ENCODE measurements at regions of chr2 and their contacts with region 1.

Region 1: GRCh38 chr2:101001691-101002561 is at the start of gene RPL31:
- DNase-seq: peak; percentile 99
- H3K4me3 Mint-ChIP-seq: peak within 1 kb of the TSS; percentile 100
- H3K27ac Mint-ChIP-seq: peak within 1 kb of the TSS; percentile 96
- H3K4me1 Mint-ChIP-seq: peaks cover 46% of the 10 kb centered on the region
- H3K27me3 Mint-ChIP-seq: no peaks in the 10 kb centered on the region
- total RNA-seq, gene RPL31: 1,154 and 1,159 TPM in 2 replicates

Region 2: GRCh38 chr2:100427628-100428258 is 574.2 kb before region 1 on chr2:
- intact Hi-C with region 1: loop called (anchors 10 kb)
- DNase-seq: peak; percentile 91
- H3K4me3 Mint-ChIP-seq: no peak overlapping the region
- H3K27ac Mint-ChIP-seq: no peak overlapping the region
- H3K4me1 Mint-ChIP-seq: peaks cover 6% of the 10 kb centered on the region
- H3K27me3 Mint-ChIP-seq: peaks cover 35% of the 10 kb centered on the region

Region 3: GRCh38 chr2:100562732-100563720 is 438.9 kb before region 1 on chr2 and contains the start of gene PDCL3:
- intact Hi-C with region 1: loop called (anchors 1 kb)
- DNase-seq: peak; percentile 99
- H3K4me3 Mint-ChIP-seq: peak within 1 kb of the TSS; percentile 99
- H3K27ac Mint-ChIP-seq: peak within 1 kb of the TSS; percentile 99
- H3K4me1 Mint-ChIP-seq: peaks cover 39% of the 10 kb centered on the region
- H3K27me3 Mint-ChIP-seq: no peaks in the 10 kb centered on the region
- total RNA-seq, gene PDCL3: 42.2 and 44.3 TPM in 2 replicates

Region 4: DNA sequence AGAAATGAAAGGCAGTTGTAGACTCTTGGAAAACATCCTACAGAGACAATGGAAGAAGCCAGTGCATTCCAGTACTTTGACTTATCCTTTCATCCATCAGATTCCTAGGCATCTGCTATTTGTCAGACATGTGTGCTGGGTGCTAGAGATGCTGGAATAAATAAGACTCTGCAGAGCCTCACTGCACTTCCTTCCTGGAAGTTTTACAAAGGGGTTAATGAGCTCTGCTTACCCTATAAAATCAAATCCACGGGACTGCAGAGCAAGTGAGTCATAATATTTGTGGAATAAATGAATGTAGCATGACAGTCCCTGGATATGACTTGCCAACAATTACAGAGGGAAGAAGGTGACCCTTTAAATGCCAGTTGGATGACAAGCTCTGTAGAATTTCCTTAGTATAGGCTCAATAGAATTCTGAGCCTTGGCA is 234.7 kb before region 1 on chr2:
- intact Hi-C with region 1: no loop called
- DNase-seq: no peak
- H3K4me3 Mint-ChIP-seq: no peak overlapping the region
- H3K27ac Mint-ChIP-seq: no peak overlapping the region
- H3K4me1 Mint-ChIP-seq: no peaks in the 10 kb centered on the region
- H3K27me3 Mint-ChIP-seq: peaks cover 7% of the 10 kb centered on the region

Region 5: GRCh38 chr2:100813527-100813926 is 188.4 kb before region 1 on chr2:
- intact Hi-C with region 1: loop called (anchors 5 kb)
- DNase-seq: peak; percentile 62
- H3K4me3 Mint-ChIP-seq: peak overlapping the region; percentile 28
- H3K27ac Mint-ChIP-seq: peak overlapping the region; percentile 35
- H3K4me1 Mint-ChIP-seq: peaks cover 30% of the 10 kb centered on the region
- H3K27me3 Mint-ChIP-seq: peaks cover 20% of the 10 kb centered on the region

Region 6: DNA sequence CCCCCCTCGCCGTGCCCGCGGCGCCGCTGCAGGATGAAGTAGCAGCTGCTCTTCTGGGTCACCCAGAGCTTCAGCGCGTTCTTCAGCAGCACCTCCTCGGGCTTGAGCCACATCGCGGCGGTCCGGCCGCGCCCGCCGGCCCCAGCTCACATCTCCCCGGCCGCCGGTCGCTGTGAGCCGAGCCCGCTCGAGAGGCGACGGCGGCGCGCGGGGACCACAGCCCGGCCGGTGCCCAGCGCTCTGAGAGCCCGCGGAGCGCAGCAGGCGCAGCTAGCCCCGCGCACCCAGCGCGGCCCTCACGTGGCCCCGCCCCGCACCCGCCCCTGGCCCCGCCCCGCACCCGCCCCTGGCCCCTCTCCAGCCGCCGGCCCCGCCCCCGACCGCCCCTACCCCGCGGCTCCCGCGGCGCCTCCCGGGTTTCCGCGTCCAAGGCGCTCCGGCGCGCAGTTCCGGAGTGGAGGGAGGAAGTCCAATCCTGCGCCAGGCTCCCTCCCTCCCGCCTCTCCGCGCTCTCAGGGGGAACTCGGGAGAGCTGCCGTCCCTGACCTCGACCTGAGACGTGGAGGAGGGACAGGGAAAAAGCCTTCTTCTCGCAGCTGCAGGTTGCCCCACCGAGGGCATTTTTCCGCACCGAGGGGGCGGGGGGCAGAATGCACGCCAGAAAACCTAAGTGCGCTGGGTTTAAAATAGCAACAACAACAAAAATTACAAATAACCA is 149.4 kb after region 1 on chr2 and contains the start of gene TBC1D8:
- intact Hi-C with region 1: loop called (anchors 5 kb)
- DNase-seq: peak; percentile 91
- H3K4me3 Mint-ChIP-seq: peak within 1 kb of the TSS; percentile 76
- H3K27ac Mint-ChIP-seq: peak within 1 kb of the TSS; percentile 48
- H3K4me1 Mint-ChIP-seq: peaks cover 17% of the 10 kb centered on the region
- H3K27me3 Mint-ChIP-seq: peaks cover 76% of the 10 kb centered on the region
- total RNA-seq, gene TBC1D8: 1.3 and 1.4 TPM in 2 replicates

Region 7: DNA sequence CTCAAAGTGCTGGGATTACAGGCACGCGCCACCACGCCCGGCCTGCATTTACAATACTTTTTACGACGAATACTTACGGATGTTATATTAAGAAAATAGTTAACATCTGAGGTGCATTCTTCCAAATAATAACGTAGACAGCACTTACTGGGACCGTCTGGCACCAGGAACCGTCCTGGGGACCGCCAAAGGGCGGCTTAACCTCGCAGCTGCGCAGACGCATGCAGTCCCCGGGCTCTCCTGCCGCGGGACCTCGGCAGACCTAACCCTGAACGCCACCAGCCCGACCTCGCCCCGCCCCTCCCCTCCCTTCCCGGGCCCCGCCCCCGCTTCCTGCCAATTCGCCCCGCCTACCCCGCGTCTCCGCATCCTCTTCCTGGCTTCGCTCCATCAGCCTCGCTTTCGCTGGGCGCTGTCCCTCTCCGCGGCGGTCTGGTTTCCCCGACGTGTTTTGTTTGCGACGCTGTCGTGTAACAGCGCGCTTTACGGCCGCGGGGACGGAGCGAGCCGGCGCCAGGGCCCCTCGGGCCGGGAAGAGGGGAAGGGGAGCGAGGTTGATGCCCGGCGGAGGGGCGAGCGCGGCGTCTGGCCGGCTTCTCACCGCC is 250.6 kb after region 1 on chr2 and contains the start of gene CNOT11:
- intact Hi-C with region 1: loop called (anchors 2 kb)
- DNase-seq: peak; percentile 99
- H3K4me3 Mint-ChIP-seq: peak within 1 kb of the TSS; percentile 93
- H3K27ac Mint-ChIP-seq: peak within 1 kb of the TSS; percentile 96
- H3K4me1 Mint-ChIP-seq: peaks cover 44% of the 10 kb centered on the region
- H3K27me3 Mint-ChIP-seq: no peaks in the 10 kb centered on the region
- total RNA-seq, gene CNOT11: 65.0 and 69.6 TPM in 2 replicates

Region 8: DNA sequence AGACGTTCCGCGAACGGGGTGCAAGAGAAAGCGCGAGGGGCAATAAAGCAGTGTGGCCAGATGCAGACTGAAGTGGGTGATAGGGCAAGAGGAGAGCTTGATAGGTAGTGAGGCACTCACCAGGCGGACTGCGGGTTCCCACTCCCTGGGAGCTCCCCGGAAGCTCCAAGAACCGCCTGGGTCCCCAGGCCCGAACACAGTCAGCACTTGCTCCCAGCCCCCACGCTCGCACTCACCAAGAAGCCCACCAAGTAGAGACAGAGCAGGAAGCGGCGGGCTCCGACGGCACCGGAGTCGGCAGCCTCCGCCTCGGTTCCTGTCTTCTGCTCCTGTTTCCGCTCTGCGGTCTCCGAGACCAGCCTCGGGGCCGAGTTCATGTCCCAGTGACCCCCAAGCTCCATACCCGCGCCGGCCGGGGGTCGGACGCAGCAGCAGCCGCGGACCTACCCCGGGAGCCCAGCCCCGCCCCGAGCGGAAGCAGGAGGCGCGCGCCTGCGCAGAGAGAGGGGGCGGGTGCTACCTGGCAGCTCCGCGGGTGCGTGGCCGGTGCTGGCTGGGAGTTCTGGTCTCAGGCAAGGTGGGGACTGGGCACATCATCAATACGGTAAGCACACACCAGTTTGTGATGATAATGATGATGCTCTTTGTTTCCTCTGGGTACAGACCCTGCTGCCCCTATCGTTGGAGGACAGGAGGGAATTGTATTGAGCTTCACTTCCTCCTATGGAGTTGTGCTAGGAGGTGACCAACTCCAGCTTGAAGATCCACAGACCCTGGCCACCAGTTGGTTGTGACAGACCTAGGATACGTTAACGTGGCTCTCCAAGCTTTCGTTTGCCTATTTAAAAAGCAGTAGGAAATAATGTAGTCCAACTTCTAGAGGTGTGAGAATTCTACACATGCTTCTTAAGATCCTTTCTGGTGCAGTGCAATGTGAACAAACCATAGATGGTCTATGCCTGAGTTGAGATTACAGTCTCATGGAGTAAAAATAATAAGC is 1734.8 kb after region 1 on chr2:
- intact Hi-C with region 1: loop called (anchors 5 kb)
- DNase-seq: peak; percentile 97
- H3K4me3 Mint-ChIP-seq: peak overlapping the region; percentile 88
- H3K27ac Mint-ChIP-seq: peak overlapping the region; percentile 89
- H3K4me1 Mint-ChIP-seq: peaks cover 22% of the 10 kb centered on the region
- H3K27me3 Mint-ChIP-seq: peaks cover 2% of the 10 kb centered on the region

Measured in activated CD4-positive, alpha-beta T cell treated with anti-CD3 and anti-CD28 coated beads, Interleukin-2, amount 10 ng/mL, durations not matched to agents 24 days and 14 days (primary cell).